Heart left ventricle (tissue), 16 donors: ENCODE measurements at regions of chr2 and their contacts with region 1.

Region 1: GRCh38 chr2:43226558-43226954 is at the start of gene ZFP36L2:
- DNase-seq: peak; percentile 98 to 99 (median 98)
- ATAC-seq: peak; percentile 71 to 86 (median 81)
- H3K4me3 ChIP-seq: peak within 1 kb of the TSS; percentile 65 to 97 (median 84)
- H3K27ac ChIP-seq: peak within 1 kb of the TSS; percentile 96 to 99 (median 99)
- H3K4me1 ChIP-seq: peaks cover 3 to 76% (median 36%) of the 10 kb centered on the region in 12 donors
- H3K27me3 ChIP-seq: no peaks in the 10 kb centered on the region
- CTCF ChIP-seq: peak in 3 of 12 donors; percentile 10 to 25 (median 14)
- POLR2A ChIP-seq: peak; percentile 73 to 100
- total RNA-seq, gene ZFP36L2: 28.8 to 94.4 (median 44.9) TPM

Region 2: GRCh38 chr2:42828487-42829425 is 397.8 kb before region 1 on chr2:
- intact Hi-C with region 1: loop called (anchors 2 to 5 kb)
- DNase-seq: peak; percentile 74 to 86 (median 81)
- ATAC-seq: peak; percentile 85 to 94 (median 89)
- H3K4me3 ChIP-seq: peak overlapping the region in 2 of 12 donors; percentile 2 to 46
- H3K27ac ChIP-seq: peak overlapping the region in 8 of 12 donors; percentile 3 to 74 (median 46)
- H3K4me1 ChIP-seq: peaks cover 0 to 30% (median 20%) of the 10 kb centered on the region in 12 donors
- H3K27me3 ChIP-seq: no peaks in the 10 kb centered on the region
- CTCF ChIP-seq: peak; percentile 87 to 96 (median 92)
- POLR2A ChIP-seq: no peak

Region 3: GRCh38 chr2:42974721-42975717 is 251.5 kb before region 1 on chr2:
- intact Hi-C with region 1: loop called (anchors 1 to 5 kb)
- DNase-seq: peak; percentile 74 to 90 (median 79)
- ATAC-seq: peak; percentile 57 to 91 (median 87)
- H3K4me3 ChIP-seq: peak overlapping the region in 11 of 12 donors; percentile 7 to 59 (median 48)
- H3K27ac ChIP-seq: peak overlapping the region in 10 of 12 donors; percentile 22 to 83 (median 48)
- H3K4me1 ChIP-seq: peaks cover 0 to 23% (median 12%) of the 10 kb centered on the region in 12 donors
- H3K27me3 ChIP-seq: no peaks in the 10 kb centered on the region
- CTCF ChIP-seq: peak; percentile 72 to 95 (median 89)
- POLR2A ChIP-seq: no peak

Region 4: GRCh38 chr2:43075054-43075593 is 151.4 kb before region 1 on chr2:
- intact Hi-C with region 1: loop called in 5 of 10 experiments (anchors 2 to 10 kb)
- DNase-seq: peak; percentile 81 to 88 (median 86)
- ATAC-seq: peak; percentile 59 to 81 (median 80)
- H3K4me3 ChIP-seq: no peak overlapping the region
- H3K27ac ChIP-seq: peak overlapping the region; percentile 58 to 93 (median 76)
- H3K4me1 ChIP-seq: peaks cover 12 to 76% (median 56%) of the 10 kb centered on the region in 12 donors
- H3K27me3 ChIP-seq: no peaks in the 10 kb centered on the region
- CTCF ChIP-seq: peak in 3 of 12 donors; percentile 16 to 21 (median 20)
- POLR2A ChIP-seq: no peak

Region 5: DNA sequence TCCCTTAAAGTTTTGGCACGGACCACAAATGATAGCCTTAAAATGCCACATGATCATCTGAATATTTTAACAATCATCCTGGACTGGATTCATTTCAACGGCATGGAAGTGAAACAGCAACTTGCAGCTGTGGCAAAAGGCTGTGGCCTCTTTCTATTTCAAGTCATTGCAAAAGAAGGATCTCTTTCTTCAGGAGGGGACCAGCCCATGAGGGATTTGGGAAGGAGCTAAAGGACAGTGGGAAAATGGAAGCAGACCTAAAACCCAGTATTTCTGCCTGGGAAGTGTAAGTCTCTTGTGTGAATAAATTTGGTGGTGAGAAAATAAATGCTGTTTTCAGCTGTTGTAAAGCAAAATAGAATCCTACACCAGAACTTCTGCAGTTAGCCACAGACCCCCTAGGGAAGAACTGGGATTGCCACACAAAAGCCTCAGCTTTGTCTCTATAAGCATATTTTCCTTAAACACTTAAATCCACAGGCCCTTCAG is 107.1 kb after region 1 on chr2:
- intact Hi-C with region 1: loop called in 1 of 10 experiments (anchors 5 kb)
- DNase-seq: peak in 3 of 5 donors; percentile 56 to 70 (median 56)
- ATAC-seq: peak; percentile 36 to 69 (median 51)
- H3K4me3 ChIP-seq: peak overlapping the region in 7 of 12 donors; percentile 0 to 23 (median 9)
- H3K27ac ChIP-seq: peak overlapping the region; percentile 54 to 94 (median 85)
- H3K4me1 ChIP-seq: peaks cover 13 to 69% (median 59%) of the 10 kb centered on the region in 12 donors
- H3K27me3 ChIP-seq: no peaks in the 10 kb centered on the region
- CTCF ChIP-seq: no peak
- POLR2A ChIP-seq: peak in 1 of 2 donors; percentile 15

Region 6: DNA sequence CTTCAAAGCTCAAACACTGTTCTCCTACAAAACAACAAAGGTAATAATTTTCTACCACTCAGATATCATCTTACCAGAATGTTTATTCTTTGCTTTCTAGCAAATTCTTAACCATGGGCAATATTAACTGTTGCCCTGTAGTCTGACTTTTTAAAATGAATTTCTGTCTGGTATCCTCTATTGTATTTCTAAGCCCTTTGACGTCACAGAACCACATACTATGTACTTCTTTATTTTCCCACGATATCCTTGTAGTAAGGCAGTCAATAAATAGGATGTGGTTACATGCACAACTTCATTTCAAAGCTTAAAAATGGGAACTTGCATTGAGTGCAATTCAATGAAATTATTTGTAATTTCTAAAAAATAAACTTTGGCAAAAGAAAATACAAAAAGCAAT is 310.6 kb after region 1 on chr2:
- intact Hi-C with region 1: loop called in 5 of 10 experiments (anchors 5 to 10 kb)
- DNase-seq: no peak
- ATAC-seq: no peak
- H3K4me3 ChIP-seq: no peak overlapping the region
- H3K27ac ChIP-seq: peak overlapping the region in 1 of 12 donors; percentile 9
- H3K4me1 ChIP-seq: peaks cover 0 to 37% (median 2%) of the 10 kb centered on the region in 12 donors
- H3K27me3 ChIP-seq: no peaks in the 10 kb centered on the region
- CTCF ChIP-seq: no peak
- POLR2A ChIP-seq: no peak